Stomach (tissue), 19 donors: ENCODE measurements at regions of chr9 and their contacts with region 1.

Region 1: DNA sequence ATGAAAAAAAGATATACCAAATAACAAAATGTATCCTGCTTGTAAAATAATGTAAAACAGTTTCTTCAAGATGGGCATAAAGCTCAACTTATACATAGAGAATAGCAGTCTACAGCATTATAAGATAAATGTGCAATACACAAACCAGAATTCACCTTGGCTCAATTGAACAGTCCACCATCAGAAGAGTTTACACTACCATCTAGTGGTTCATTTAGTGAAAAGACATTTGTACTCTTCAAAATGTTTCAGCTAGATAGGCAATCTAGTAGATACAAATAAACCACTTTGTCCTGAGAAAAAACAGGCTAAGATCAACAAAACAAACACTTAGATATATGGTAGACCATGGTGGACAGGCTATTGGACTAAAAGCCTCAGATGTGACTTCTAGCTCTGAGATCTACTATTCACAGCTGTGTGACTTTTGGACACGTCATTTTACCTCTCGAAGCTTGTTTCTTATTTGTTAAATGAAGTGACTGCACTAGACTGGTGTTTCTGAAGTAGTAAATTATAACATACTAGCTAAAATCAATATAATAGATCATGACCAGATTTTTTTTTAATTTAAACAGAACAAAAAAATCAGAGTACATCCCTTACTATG is 22.1 kb upstream of the TPD52L3 start:
- DNase-seq: peak in 1 of 2 donors; percentile 70
- H3K4me3 ChIP-seq: no peak overlapping the region
- H3K27ac ChIP-seq: no peak overlapping the region
- H3K4me1 ChIP-seq: no peaks in the 10 kb centered on the region
- H3K27me3 ChIP-seq: peaks cover 0 to 5% (median 0%) of the 10 kb centered on the region in 3 donors
- CTCF ChIP-seq: peak in 4 of 7 experiments; percentile 17 to 69 (median 52)
- EP300 ChIP-seq: no peak
- POLR2A ChIP-seq: no peak

Region 2: DNA sequence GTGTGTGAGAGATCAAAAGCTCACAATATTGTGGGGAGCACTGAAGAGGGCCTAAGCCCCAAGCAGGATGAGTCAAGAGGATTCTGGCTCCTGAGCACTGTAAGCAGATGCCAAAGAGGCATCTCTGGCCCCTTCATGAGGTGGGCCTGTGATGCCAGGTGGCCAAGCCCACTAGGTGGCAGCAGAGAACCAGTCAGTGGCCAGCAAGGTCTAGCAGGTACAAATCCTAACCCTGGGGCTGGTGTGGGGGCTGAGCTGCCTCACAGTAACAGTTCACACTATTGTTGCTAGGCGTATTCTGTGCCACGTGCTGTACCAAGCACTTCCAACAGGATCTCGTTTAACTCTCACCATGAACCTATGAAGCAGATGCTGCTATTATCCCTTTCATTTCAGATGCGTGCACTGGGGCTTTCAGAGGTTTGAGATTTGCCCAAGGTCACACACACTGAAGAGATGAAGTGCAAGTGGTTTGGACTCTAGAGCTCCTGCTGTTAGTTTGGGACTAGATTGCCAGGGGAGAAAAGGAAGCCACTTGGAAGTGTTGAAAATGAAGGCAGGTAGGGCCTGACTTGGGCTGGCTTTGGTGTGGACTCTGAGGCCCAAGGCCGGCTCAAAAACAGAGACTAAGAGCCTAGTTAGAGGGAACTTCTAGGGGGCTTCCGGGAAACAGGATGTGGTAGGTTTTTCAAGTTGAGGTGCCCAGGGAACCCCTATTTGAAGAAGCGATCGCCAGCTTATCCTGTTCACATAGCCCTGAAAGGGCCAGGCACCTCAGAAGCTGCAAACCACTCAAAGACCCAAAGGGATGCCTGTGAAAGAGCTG is 419.7 kb before region 1 on chr9:
- intact Hi-C with region 1: loop called (anchors 5 kb)
- DNase-seq: peak; percentile 78 to 92
- H3K4me3 ChIP-seq: no peak overlapping the region
- H3K27ac ChIP-seq: no peak overlapping the region
- H3K4me1 ChIP-seq: no peaks in the 10 kb centered on the region
- H3K27me3 ChIP-seq: no peaks in the 10 kb centered on the region
- CTCF ChIP-seq: peak in 5 of 7 experiments; percentile 77 to 96 (median 77)
- EP300 ChIP-seq: no peak
- POLR2A ChIP-seq: no peak

Region 3: DNA sequence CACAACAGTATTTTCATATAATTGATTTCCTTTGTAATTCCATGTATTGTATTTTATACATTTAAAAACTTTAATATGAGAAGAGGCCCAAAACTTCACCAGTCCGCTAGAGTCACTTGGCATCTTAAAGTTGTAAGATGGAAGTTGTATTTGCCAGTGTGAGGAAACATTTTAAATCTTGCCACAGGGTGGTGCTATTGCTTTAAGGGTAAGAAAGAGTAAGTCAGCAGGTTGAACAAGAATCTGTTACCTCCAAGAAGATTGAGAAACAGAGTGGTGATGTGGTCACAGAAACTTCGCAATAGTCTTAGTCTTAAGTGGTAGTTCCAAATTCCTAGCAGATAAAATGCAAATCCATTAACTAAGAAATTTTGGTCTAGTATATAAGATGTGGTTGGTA is 250.8 kb before region 1 on chr9:
- intact Hi-C with region 1: loop called (anchors 10 kb)
- DNase-seq: peak; percentile 49 to 91
- H3K4me3 ChIP-seq: no peak overlapping the region
- H3K27ac ChIP-seq: no peak overlapping the region
- H3K4me1 ChIP-seq: peaks cover 0 to 8% (median 3%) of the 10 kb centered on the region in 4 donors
- H3K27me3 ChIP-seq: no peaks in the 10 kb centered on the region
- CTCF ChIP-seq: peak in 5 of 7 experiments; percentile 40 to 75 (median 49)
- EP300 ChIP-seq: no peak
- POLR2A ChIP-seq: no peak

Region 4: GRCh38 chr9:6197330-6197729 is 108.7 kb before region 1 on chr9:
- intact Hi-C with region 1: loop called (anchors 10 kb)
- DNase-seq: peak in 1 of 2 donors; percentile 41
- H3K4me3 ChIP-seq: no peak overlapping the region
- H3K27ac ChIP-seq: no peak overlapping the region
- H3K4me1 ChIP-seq: no peaks in the 10 kb centered on the region
- H3K27me3 ChIP-seq: no peaks in the 10 kb centered on the region
- CTCF ChIP-seq: peak in 5 of 7 experiments; percentile 8 to 79 (median 44)
- EP300 ChIP-seq: no peak
- POLR2A ChIP-seq: no peak

Region 5: GRCh38 chr9:6449645-6450044 is 143.6 kb after region 1 on chr9:
- intact Hi-C with region 1: no loop called
- DNase-seq: no peak
- H3K4me3 ChIP-seq: no peak overlapping the region
- H3K27ac ChIP-seq: no peak overlapping the region
- H3K4me1 ChIP-seq: peaks cover 16 to 65% (median 48%) of the 10 kb centered on the region in 4 donors
- H3K27me3 ChIP-seq: no peaks in the 10 kb centered on the region
- CTCF ChIP-seq: no peak
- EP300 ChIP-seq: no peak
- POLR2A ChIP-seq: no peak